Ovary (tissue), 10 donors: ENCODE measurements at regions of chr15 and their contacts with region 1.

Region 1: DNA sequence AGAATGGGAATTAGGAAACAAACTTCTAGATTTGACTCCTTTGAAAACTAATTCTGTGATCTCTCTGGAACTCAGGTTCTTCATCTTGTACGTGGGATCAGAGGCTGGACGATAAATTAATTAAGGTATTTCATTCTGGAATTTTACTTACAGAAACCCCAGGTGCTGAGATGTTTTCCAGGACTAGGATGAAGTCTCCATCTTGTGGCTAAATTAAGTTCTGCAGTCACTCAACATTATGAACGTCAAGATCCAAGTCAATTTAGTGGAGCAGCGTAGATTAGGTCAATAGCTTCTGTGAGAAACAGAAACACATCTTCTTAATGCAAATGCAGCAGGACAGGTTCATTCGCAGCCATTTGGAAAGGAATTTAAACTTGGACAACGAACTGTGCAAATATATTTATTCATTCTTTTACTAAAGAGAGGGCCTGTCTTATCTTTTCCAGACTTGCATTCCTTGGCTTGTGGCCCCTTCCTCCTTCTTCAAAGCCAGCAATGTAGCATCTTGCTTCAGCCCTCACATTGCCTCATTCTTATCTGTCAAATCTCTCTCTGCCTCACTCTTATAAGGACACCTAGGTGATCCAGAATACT is 26.7 kb upstream of the TMC3 start:
- DNase-seq: no peak
- H3K4me3 ChIP-seq: no peak overlapping the region
- H3K27ac ChIP-seq: no peak overlapping the region
- H3K4me1 ChIP-seq: no peaks in the 10 kb centered on the region
- H3K27me3 ChIP-seq: no peaks in the 10 kb centered on the region
- CTCF ChIP-seq: peak; percentile 22 to 63 (median 49)
- EP300 ChIP-seq: no peak
- POLR2A ChIP-seq: no peak

Region 2: GRCh38 chr15:81106560-81106959 is 294.2 kb before region 1 on chr15:
- intact Hi-C with region 1: loop called in 1 of 4 experiments (anchors 10 kb)
- DNase-seq: peak in 4 of 5 donors; percentile 19 to 57 (median 40)
- H3K4me3 ChIP-seq: no peak overlapping the region
- H3K27ac ChIP-seq: no peak overlapping the region
- H3K4me1 ChIP-seq: peaks cover 1% of the 10 kb centered on the region
- H3K27me3 ChIP-seq: no peaks in the 10 kb centered on the region
- CTCF ChIP-seq: peak; percentile 16 to 60 (median 54)
- EP300 ChIP-seq: no peak
- POLR2A ChIP-seq: no peak

Region 3: DNA sequence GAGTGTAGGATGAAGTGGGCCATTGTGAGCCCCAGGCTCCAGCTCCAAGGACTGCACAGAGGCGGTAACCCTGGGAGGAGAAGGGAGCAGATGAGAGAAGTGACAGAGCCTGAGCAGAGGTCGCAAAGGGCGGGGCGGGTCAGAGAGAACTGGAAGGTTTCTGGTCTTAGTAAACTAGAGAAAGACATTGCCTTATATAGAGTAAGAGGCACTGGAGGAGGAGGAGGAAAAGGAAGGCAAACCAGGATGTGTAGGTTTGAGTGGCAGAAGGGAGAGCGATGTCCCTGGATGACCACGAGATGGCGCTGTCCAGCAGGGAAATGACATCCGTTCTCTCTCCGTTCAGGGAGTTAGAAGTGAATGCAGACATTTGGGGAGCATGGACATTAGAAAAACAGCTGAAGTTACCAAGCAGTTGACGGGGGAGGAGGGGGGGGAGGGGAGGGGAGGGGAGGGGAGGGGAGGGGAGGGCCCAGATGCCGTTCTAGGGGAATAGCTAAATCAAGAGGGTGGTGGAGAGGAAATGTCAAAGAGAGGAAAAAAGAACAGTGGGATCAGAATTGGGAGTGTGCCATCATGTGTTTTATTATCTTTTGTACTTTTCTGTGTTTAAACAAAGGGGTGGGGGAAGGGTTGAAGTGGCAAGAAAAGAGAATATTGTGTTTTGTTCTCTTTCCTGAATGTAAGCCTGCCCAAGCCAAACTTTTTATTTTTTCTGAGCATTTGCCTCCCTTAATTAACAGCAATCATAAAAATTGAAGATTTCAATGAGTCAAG is 125.6 kb before region 1 on chr15:
- intact Hi-C with region 1: loop called (anchors 5 to 10 kb)
- DNase-seq: peak; percentile 69 to 81 (median 79)
- H3K4me3 ChIP-seq: no peak overlapping the region
- H3K27ac ChIP-seq: no peak overlapping the region
- H3K4me1 ChIP-seq: no peaks in the 10 kb centered on the region
- H3K27me3 ChIP-seq: no peaks in the 10 kb centered on the region
- CTCF ChIP-seq: peak; percentile 22 to 76 (median 70)
- EP300 ChIP-seq: no peak
- POLR2A ChIP-seq: no peak

Region 4: GRCh38 chr15:81351651-81352050 is 49.1 kb before region 1 on chr15:
- intact Hi-C with region 1: no loop called
- DNase-seq: no peak
- H3K4me3 ChIP-seq: no peak overlapping the region
- H3K27ac ChIP-seq: no peak overlapping the region
- H3K4me1 ChIP-seq: no peaks in the 10 kb centered on the region
- H3K27me3 ChIP-seq: no peaks in the 10 kb centered on the region
- CTCF ChIP-seq: no peak
- EP300 ChIP-seq: no peak
- POLR2A ChIP-seq: no peak